CD4-positive, alpha-beta memory T cell (primary cell): ENCODE measurements at regions of chr16 and their contacts with region 1.

Region 1: GRCh38 chr16:30650369-30651123 is at the start of gene PRR14:
- DNase-seq: peak; percentile 96 to 99 (median 97)
- H3K4me3 ChIP-seq: peak within 1 kb of the TSS; percentile 99
- H3K4me3 Mint-ChIP-seq: peak within 1 kb of the TSS; percentile 95 to 100 (median 99)
- H3K27ac ChIP-seq: peak within 1 kb of the TSS; percentile 96
- H3K27ac Mint-ChIP-seq: peak within 1 kb of the TSS; percentile 97 to 100 (median 99)
- H3K4me1 ChIP-seq: peaks cover 20% of the 10 kb centered on the region
- H3K4me1 Mint-ChIP-seq: peaks cover 11 to 32% (median 18%) of the 10 kb centered on the region in 4 donors
- H3K27me3 ChIP-seq: no peaks in the 10 kb centered on the region
- H3K27me3 Mint-ChIP-seq: peaks cover 0 to 2% of the 10 kb centered on the region in 2 donors
- total RNA-seq, gene PRR14: 92.0 to 100 TPM

Region 2: GRCh38 chr16:30466766-30467165 is 183.8 kb before region 1 on chr16:
- CTCF ChIA-PET with region 1: no interaction called
- POLR2A ChIA-PET with region 1: no interaction called
- intact Hi-C with region 1: no loop called
- DNase-seq: no peak
- H3K4me3 ChIP-seq: no peak overlapping the region
- H3K4me3 Mint-ChIP-seq: no peak overlapping the region
- H3K27ac ChIP-seq: no peak overlapping the region
- H3K27ac Mint-ChIP-seq: peak overlapping the region in 2 of 7 donors; percentile 27 to 53
- H3K4me1 ChIP-seq: peaks cover 34% of the 10 kb centered on the region
- H3K4me1 Mint-ChIP-seq: peaks cover 17 to 36% (median 26%) of the 10 kb centered on the region in 4 donors
- H3K27me3 ChIP-seq: no peaks in the 10 kb centered on the region
- H3K27me3 Mint-ChIP-seq: no peaks in the 10 kb centered on the region

Region 3: GRCh38 chr16:30571695-30572600 is 78.6 kb before region 1 on chr16 and contains the start of gene ZNF688:
- CTCF ChIA-PET with region 1: no interaction called
- POLR2A ChIA-PET with region 1: interaction called, 12 read pairs
- intact Hi-C with region 1: loop called (anchors 1 kb)
- DNase-seq: peak; percentile 94 to 100 (median 97)
- H3K4me3 ChIP-seq: peak within 1 kb of the TSS; percentile 65 to 71
- H3K4me3 Mint-ChIP-seq: peak within 1 kb of the TSS; percentile 86 to 96 (median 91)
- H3K27ac ChIP-seq: peak within 1 kb of the TSS; percentile 90
- H3K27ac Mint-ChIP-seq: peak within 1 kb of the TSS; percentile 96 to 97 (median 97)
- H3K4me1 ChIP-seq: peaks cover 50% of the 10 kb centered on the region
- H3K4me1 Mint-ChIP-seq: peaks cover 22 to 51% (median 36%) of the 10 kb centered on the region in 4 donors
- H3K27me3 ChIP-seq: no peaks in the 10 kb centered on the region
- H3K27me3 Mint-ChIP-seq: no peaks in the 10 kb centered on the region
- total RNA-seq, gene ZNF688: 21.4 to 22.7 TPM

Region 4: DNA sequence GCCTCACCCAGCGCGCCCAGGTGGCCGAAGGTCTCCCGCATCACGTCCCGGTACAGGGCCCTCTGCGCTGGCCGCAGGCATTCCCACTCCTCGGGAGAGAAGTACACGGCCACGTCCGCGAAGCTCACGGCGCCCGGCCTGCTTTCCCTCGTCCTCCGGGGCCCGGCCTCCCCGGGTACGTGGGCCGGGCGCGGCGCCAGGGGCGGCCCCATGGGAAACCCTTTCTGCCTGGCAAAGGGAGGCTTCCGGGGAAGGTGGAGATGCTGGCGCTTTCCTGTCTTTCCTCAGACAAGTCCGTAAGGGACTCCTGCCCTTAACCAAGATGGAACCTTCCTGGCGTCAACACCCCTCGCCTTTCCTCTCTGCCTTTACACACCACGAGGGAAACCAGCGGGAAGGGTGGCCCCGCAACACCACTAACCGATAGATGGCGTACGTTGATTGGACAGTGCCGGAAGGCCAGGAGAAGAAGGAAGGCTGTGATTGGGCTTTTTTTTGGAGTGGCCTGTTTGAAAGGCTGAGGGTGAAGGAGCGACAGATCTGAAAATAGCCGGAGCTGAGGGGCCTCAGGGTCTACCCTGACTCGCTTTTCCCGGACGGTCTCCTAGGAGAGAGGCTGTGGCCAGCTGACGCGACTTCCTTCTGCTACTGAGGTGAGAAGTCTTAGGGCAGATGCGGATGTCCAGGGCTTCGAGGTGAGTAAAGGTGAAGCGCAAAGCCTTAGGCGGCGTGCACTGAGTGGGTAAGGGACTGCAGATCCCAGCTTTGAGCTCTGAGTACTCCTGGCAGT is 65.0 kb before region 1 on chr16 and contains the start of gene ZNF785:
- CTCF ChIA-PET with region 1: interaction called, 3 read pairs
- POLR2A ChIA-PET with region 1: interaction called, 5 read pairs
- intact Hi-C with region 1: loop called (anchors 1 kb)
- DNase-seq: peak; percentile 94 to 96 (median 95)
- H3K4me3 ChIP-seq: peak within 1 kb of the TSS; percentile 73 to 97
- H3K4me3 Mint-ChIP-seq: peak within 1 kb of the TSS; percentile 87 to 96 (median 91)
- H3K27ac ChIP-seq: peak within 1 kb of the TSS; percentile 79
- H3K27ac Mint-ChIP-seq: peak within 1 kb of the TSS; percentile 76 to 96 (median 93)
- H3K4me1 ChIP-seq: peaks cover 21% of the 10 kb centered on the region
- H3K4me1 Mint-ChIP-seq: peaks cover 9 to 38% (median 26%) of the 10 kb centered on the region in 4 donors
- H3K27me3 ChIP-seq: no peaks in the 10 kb centered on the region
- H3K27me3 Mint-ChIP-seq: no peaks in the 10 kb centered on the region
- total RNA-seq, gene ZNF785: 33.4 to 34.2 TPM

Region 5: DNA sequence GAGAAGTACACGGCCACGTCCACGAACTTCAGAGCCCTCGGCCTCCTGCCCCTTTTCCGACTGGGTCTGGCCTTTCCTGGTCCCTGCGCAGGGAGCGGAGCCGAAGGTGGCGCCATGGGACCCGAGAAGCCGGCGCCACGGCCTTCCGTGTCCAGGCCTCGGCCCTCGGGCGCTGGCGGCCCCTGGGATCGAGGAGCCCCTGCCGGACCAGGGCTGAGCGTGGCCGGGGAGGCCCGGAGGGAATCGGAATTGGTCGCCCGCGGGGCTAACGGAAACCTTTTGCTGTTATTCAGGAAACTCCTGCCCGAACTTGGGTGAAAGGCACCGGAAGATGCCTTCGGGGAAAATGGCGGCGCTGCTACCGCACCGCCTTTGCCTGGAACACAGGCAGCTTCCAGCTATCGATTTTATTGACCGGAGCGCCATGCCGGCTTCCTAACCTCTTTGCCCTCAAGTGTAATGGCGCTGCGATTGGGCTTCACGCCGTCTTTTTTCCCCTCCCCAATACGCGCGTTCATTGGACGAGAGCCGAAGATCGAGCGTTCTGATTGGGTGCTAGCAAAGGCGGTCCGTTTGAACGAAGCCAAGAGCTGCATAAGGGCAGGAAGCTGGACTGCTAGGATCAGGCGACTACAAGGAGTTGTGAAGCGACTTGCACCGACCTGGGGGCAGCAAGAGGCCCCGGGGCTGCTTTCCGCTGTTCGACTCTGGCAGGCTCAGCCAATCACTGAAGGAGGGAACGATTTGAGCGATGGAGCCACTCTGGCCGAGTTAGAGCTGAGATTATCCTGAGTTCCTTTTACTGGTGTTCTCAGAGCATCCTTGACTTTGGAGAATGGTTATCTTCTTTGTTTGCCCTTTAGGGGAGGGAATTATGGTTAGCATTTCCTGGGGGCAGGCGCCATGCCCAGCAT is 40.4 kb before region 1 on chr16 and contains the start of gene ZNF689:
- CTCF ChIA-PET with region 1: interaction called, 5 read pairs
- POLR2A ChIA-PET with region 1: interaction called, 11 read pairs
- intact Hi-C with region 1: loop called (anchors 1 kb)
- DNase-seq: peak; percentile 92 to 98 (median 95)
- H3K4me3 ChIP-seq: peak within 1 kb of the TSS; percentile 71 to 99
- H3K4me3 Mint-ChIP-seq: peak within 1 kb of the TSS; percentile 85 to 96 (median 94)
- H3K27ac ChIP-seq: peak within 1 kb of the TSS; percentile 97
- H3K27ac Mint-ChIP-seq: peak within 1 kb of the TSS; percentile 93 to 98 (median 96)
- H3K4me1 ChIP-seq: peaks cover 21% of the 10 kb centered on the region
- H3K4me1 Mint-ChIP-seq: peaks cover 10 to 18% (median 13%) of the 10 kb centered on the region in 4 donors
- H3K27me3 ChIP-seq: no peaks in the 10 kb centered on the region
- H3K27me3 Mint-ChIP-seq: no peaks in the 10 kb centered on the region
- total RNA-seq, gene ZNF689: 13.1 to 14.5 TPM

Region 6: DNA sequence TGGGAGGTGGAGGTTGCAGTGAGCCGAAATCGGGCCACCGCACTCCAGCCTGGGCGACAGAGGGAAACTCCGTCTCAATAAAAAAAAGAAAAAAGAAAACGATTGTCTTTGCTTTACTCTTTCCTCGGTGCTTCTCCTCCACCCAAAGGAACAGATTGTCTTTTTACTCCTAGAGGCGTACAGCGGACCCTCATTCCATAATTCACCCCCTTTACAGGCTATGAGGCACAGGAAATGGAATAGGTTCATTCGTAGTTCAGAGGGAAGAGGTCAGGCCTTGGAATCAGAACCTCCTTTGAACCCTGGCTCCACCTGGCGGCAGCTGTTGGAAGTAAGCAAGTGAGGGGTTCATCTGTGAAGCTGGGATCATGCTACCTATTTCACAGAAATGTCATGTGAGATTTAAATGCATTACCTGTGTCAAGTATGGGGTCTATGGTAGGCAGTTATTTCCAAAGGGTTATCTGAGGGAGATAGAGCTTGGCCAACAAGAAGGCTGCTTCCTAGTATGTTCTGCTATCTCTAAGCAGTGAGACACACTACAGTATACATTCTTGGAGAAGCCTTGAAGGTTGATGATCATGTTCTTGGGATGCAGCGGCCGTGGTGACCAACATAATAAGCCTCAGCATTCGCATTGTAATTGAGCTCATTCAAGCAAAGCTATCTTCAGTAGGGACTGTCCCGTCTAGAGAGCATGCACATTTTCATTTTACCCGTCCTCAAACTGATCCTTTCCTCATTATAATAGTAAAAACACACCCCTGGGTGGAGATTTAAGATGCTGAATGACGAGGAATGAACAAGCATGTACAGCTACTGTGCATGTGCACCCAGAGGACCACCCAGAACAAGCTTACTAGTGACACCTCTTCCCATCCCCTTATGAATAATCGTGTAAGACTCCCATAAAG is 21.7 kb before region 1 on chr16:
- CTCF ChIA-PET with region 1: interaction called, 7 read pairs
- POLR2A ChIA-PET with region 1: interaction called, 37 read pairs
- intact Hi-C with region 1: loop called (anchors 1 kb)
- DNase-seq: peak; percentile 72 to 83 (median 80)
- H3K4me3 ChIP-seq: peak overlapping the region in 1 of 2 donors; percentile 48
- H3K4me3 Mint-ChIP-seq: peak overlapping the region; percentile 67 to 86 (median 78)
- H3K27ac ChIP-seq: no peak overlapping the region
- H3K27ac Mint-ChIP-seq: peak overlapping the region; percentile 38 to 95 (median 87)
- H3K4me1 ChIP-seq: peaks cover 9% of the 10 kb centered on the region
- H3K4me1 Mint-ChIP-seq: peaks cover 4 to 9% (median 7%) of the 10 kb centered on the region in 4 donors
- H3K27me3 ChIP-seq: no peaks in the 10 kb centered on the region
- H3K27me3 Mint-ChIP-seq: peaks cover 0 to under 1% of the 10 kb centered on the region in 2 donors

Region 7: GRCh38 chr16:30637942-30638341 is 12.6 kb before region 1 on chr16:
- CTCF ChIA-PET with region 1: interaction called, 4 read pairs
- POLR2A ChIA-PET with region 1: interaction called, 37 read pairs
- intact Hi-C with region 1: loop called (anchors 1 kb)
- DNase-seq: peak in 4 of 5 donors; percentile 35 to 54 (median 36)
- H3K4me3 ChIP-seq: no peak overlapping the region
- H3K4me3 Mint-ChIP-seq: no peak overlapping the region
- H3K27ac ChIP-seq: no peak overlapping the region
- H3K27ac Mint-ChIP-seq: peak overlapping the region in 2 of 7 donors; percentile 53 to 68
- H3K4me1 ChIP-seq: peaks cover 13% of the 10 kb centered on the region
- H3K4me1 Mint-ChIP-seq: peaks cover 2 to 16% (median 10%) of the 10 kb centered on the region in 4 donors
- H3K27me3 ChIP-seq: no peaks in the 10 kb centered on the region
- H3K27me3 Mint-ChIP-seq: no peaks in the 10 kb centered on the region

Region 8: GRCh38 chr16:30692381-30693064 is 42.0 kb after region 1 on chr16:
- CTCF ChIA-PET with region 1: interaction called, 11 read pairs
- POLR2A ChIA-PET with region 1: interaction called, 22 read pairs
- intact Hi-C with region 1: loop called (anchors 1 kb)
- DNase-seq: no peak
- H3K4me3 ChIP-seq: no peak overlapping the region
- H3K4me3 Mint-ChIP-seq: no peak overlapping the region
- H3K27ac ChIP-seq: no peak overlapping the region
- H3K27ac Mint-ChIP-seq: peak overlapping the region in 5 of 7 donors; percentile 20 to 62 (median 29)
- H3K4me1 ChIP-seq: peaks cover 14% of the 10 kb centered on the region
- H3K4me1 Mint-ChIP-seq: peaks cover 8 to 19% (median 12%) of the 10 kb centered on the region in 4 donors
- H3K27me3 ChIP-seq: no peaks in the 10 kb centered on the region
- H3K27me3 Mint-ChIP-seq: no peaks in the 10 kb centered on the region